B cell (primary cell): ENCODE measurements at regions of chr9 and their contacts with region 1.

Region 1: GRCh38 chr9:6055213-6055612 is 39.8 kb upstream of the RANBP6 start:
- DNase-seq: peak; percentile 73
- ATAC-seq: peak; percentile 34
- H3K4me3 ChIP-seq: no peak overlapping the region
- H3K4me3 Mint-ChIP-seq: no peak overlapping the region
- H3K27ac ChIP-seq: no peak overlapping the region
- H3K27ac Mint-ChIP-seq: no peak overlapping the region
- H3K4me1 ChIP-seq: peaks cover 11 to 20% of the 10 kb centered on the region in 2 donors
- H3K4me1 Mint-ChIP-seq: peaks cover 18% of the 10 kb centered on the region
- H3K27me3 ChIP-seq: no peaks in the 10 kb centered on the region
- H3K27me3 Mint-ChIP-seq: no peaks in the 10 kb centered on the region
- CTCF ChIP-seq: peak; percentile 37

Region 2: GRCh38 chr9:5886114-5886939 is 168.9 kb before region 1 on chr9:
- CTCF ChIA-PET with region 1: interaction called, 107 read pairs
- POLR2A ChIA-PET with region 1: no interaction called
- intact Hi-C with region 1: no loop called
- DNase-seq: peak; percentile 74
- ATAC-seq: peak; percentile 80
- H3K4me3 ChIP-seq: no peak overlapping the region
- H3K4me3 Mint-ChIP-seq: no peak overlapping the region
- H3K27ac ChIP-seq: no peak overlapping the region
- H3K27ac Mint-ChIP-seq: no peak overlapping the region
- H3K4me1 ChIP-seq: no peaks in the 10 kb centered on the region
- H3K4me1 Mint-ChIP-seq: no peaks in the 10 kb centered on the region
- H3K27me3 ChIP-seq: no peaks in the 10 kb centered on the region
- H3K27me3 Mint-ChIP-seq: no peaks in the 10 kb centered on the region
- CTCF ChIP-seq: peak; percentile 90

Region 3: DNA sequence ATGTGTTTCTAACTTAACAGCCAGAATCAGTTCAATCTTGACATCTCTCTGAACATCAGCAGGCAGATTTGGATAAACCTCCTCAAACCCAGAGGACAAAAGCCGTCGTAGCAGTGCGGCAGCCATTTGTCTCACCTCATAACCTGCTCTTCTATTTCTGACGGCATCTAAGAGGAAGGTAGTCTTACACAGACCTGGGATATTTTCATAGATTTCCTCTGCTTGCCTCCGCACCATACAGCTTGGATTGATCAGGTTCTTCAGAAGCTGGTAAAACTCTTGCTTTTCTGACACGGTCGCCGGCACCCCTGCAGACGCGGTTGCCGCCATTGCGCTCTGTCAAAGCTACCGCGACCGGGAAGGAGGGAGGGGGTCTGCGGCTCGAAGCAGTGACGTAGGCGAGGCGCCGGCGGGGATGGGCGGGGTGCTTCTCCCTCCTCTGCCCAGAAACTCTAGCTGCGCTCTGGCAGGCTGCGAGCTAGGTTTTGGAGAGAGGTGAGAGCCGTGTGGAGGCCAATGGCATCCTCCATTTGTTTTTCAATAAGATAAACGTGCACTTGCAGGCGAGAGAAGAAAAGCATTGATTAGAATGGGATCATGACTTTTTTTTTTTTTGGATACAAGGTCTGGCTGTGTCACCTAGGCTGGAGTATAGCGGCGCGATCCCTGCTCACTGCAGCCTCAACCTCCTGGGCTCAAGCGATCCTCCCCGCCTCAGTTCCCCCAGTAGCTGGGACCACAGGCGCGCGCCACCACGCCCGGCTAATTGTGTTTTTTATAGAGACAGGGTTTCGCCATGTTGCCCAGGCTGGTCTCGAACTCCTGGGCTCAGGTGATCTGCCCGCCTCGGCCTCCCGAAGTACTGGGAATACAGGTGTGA is 39.7 kb before region 1 on chr9 and contains the start of gene RANBP6:
- CTCF ChIA-PET with region 1: interaction called, 10 read pairs
- POLR2A ChIA-PET with region 1: no interaction called
- intact Hi-C with region 1: no loop called
- DNase-seq: peak; percentile 91
- ATAC-seq: peak; percentile 100
- H3K4me3 ChIP-seq: peak within 1 kb of the TSS; percentile 64 to 100 (median 73)
- H3K4me3 Mint-ChIP-seq: peak within 1 kb of the TSS; percentile 98
- H3K27ac ChIP-seq: peak within 1 kb of the TSS; percentile 65 to 83
- H3K27ac Mint-ChIP-seq: peak within 1 kb of the TSS; percentile 95
- H3K4me1 ChIP-seq: peaks cover 7 to 15% of the 10 kb centered on the region in 2 donors
- H3K4me1 Mint-ChIP-seq: peaks cover 34% of the 10 kb centered on the region
- H3K27me3 ChIP-seq: no peaks in the 10 kb centered on the region
- H3K27me3 Mint-ChIP-seq: no peaks in the 10 kb centered on the region
- CTCF ChIP-seq: no peak
- total RNA-seq, gene RANBP6: 25.0 and 25.9 TPM in 2 replicates

Region 4: DNA sequence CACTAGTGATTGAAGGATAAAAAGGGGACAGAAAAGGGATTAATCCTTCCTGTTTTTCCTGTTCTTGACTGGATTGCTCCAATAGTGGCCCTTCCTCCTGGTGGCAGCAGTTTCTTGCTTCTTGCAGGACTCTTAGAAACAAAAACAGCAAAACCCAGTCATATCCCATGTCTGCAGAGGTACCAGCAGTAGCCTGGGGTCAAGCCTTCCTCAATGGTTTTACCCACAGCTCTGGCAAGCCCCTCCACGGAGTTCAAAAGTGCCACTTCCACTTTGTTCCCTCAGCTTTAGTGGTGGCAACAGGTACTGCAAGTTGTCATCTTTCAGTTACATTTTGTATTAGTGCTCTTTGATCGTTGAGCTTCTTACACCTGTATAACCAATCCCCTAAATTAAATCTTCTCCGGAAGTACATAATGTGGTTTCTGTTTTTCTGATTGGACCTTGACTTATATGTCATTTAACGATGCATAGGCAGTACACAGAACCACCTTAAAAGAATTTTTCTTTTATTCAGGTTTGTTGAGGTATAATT is 31.1 kb before region 1 on chr9:
- CTCF ChIA-PET with region 1: interaction called, 14 read pairs
- POLR2A ChIA-PET with region 1: no interaction called
- intact Hi-C with region 1: no loop called
- DNase-seq: peak; percentile 67
- ATAC-seq: peak; percentile 70
- H3K4me3 ChIP-seq: no peak overlapping the region
- H3K4me3 Mint-ChIP-seq: no peak overlapping the region
- H3K27ac ChIP-seq: no peak overlapping the region
- H3K27ac Mint-ChIP-seq: no peak overlapping the region
- H3K4me1 ChIP-seq: peaks cover 0 to 3% of the 10 kb centered on the region in 2 donors
- H3K4me1 Mint-ChIP-seq: peaks cover 4% of the 10 kb centered on the region
- H3K27me3 ChIP-seq: peaks cover 0 to 6% (median 0%) of the 10 kb centered on the region in 4 experiments
- H3K27me3 Mint-ChIP-seq: peaks cover 17% of the 10 kb centered on the region
- CTCF ChIP-seq: peak; percentile 73

Region 5: GRCh38 chr9:6068983-6069382 is 13.8 kb after region 1 on chr9:
- CTCF ChIA-PET with region 1: interaction called, 39 read pairs
- POLR2A ChIA-PET with region 1: no interaction called
- intact Hi-C with region 1: no loop called
- DNase-seq: peak; percentile 73
- ATAC-seq: peak; percentile 98
- H3K4me3 ChIP-seq: peak overlapping the region in 1 of 5 experiments; percentile 20
- H3K4me3 Mint-ChIP-seq: peak overlapping the region; percentile 70
- H3K27ac ChIP-seq: peak overlapping the region; percentile 8 to 37
- H3K27ac Mint-ChIP-seq: peak overlapping the region; percentile 82
- H3K4me1 ChIP-seq: peaks cover 15 to 19% of the 10 kb centered on the region in 2 donors
- H3K4me1 Mint-ChIP-seq: peaks cover 17% of the 10 kb centered on the region
- H3K27me3 ChIP-seq: peaks cover 0 to 9% (median 0%) of the 10 kb centered on the region in 4 experiments
- H3K27me3 Mint-ChIP-seq: peaks cover 11% of the 10 kb centered on the region
- CTCF ChIP-seq: no peak

Region 6: GRCh38 chr9:6467006-6467625 is 411.9 kb after region 1 on chr9:
- CTCF ChIA-PET with region 1: no interaction called
- POLR2A ChIA-PET with region 1: no interaction called
- intact Hi-C with region 1: no loop called
- DNase-seq: no peak
- ATAC-seq: no peak
- H3K4me3 ChIP-seq: no peak overlapping the region
- H3K4me3 Mint-ChIP-seq: no peak overlapping the region
- H3K27ac ChIP-seq: no peak overlapping the region
- H3K27ac Mint-ChIP-seq: no peak overlapping the region
- H3K4me1 ChIP-seq: no peaks in the 10 kb centered on the region
- H3K4me1 Mint-ChIP-seq: peaks cover 5% of the 10 kb centered on the region
- H3K27me3 ChIP-seq: no peaks in the 10 kb centered on the region
- H3K27me3 Mint-ChIP-seq: no peaks in the 10 kb centered on the region
- CTCF ChIP-seq: no peak

Region 7: DNA sequence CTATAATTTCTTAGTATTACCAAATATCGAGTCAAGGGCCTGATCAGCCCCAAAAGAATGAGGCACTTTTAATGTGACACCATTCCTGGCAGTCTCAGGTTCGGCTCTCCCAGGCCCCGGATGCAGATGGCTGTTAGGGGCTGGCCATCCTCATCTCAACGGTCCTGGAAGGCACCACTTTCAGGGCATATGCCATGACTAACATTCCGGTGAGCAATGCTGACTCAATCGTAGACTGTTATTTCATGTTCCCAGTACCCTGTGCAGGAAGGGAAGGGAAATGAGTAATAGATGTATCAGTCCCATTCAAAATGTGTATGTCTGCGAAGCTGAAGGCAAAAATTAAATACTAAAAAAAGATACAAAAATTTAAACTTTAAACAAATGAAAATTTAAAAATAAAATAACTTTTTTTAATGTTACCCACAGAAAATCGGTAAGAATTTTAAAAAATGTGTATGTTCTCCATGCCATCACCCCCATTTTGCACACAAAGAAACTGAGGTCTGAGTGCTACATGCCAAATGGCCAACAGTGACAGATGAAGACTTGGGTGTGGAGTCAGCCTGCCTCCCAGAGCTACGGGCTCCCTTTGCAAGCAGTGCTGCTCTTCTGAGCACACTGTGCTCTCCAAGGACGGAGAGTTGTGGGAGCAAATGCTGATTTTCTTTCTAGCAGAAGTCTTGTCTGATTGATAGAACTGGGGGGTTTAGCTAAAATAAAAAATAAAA is 511.4 kb after region 1 on chr9:
- CTCF ChIA-PET with region 1: no interaction called
- POLR2A ChIA-PET with region 1: no interaction called
- intact Hi-C with region 1: loop called (anchors 2 kb)
- DNase-seq: no peak
- ATAC-seq: no peak
- H3K4me3 ChIP-seq: no peak overlapping the region
- H3K4me3 Mint-ChIP-seq: no peak overlapping the region
- H3K27ac ChIP-seq: no peak overlapping the region
- H3K27ac Mint-ChIP-seq: no peak overlapping the region
- H3K4me1 ChIP-seq: no peaks in the 10 kb centered on the region
- H3K4me1 Mint-ChIP-seq: no peaks in the 10 kb centered on the region
- H3K27me3 ChIP-seq: no peaks in the 10 kb centered on the region
- H3K27me3 Mint-ChIP-seq: peaks cover 4% of the 10 kb centered on the region
- CTCF ChIP-seq: no peak